Mammary epithelial cell (primary cell): ENCODE measurements at regions of chr1 and their contacts with region 1.

Region 1: GRCh38 chr1:231493421-231494185 is 34.9 kb upstream of the TSNAX start:
- DNase-seq: peak; percentile 29
- H3K4me3 ChIP-seq: no peak overlapping the region
- H3K27ac ChIP-seq: no peak overlapping the region
- H3K4me1 ChIP-seq: no peaks in the 10 kb centered on the region
- H3K27me3 ChIP-seq: no peaks in the 10 kb centered on the region
- CTCF ChIP-seq: no peak

Region 2: DNA sequence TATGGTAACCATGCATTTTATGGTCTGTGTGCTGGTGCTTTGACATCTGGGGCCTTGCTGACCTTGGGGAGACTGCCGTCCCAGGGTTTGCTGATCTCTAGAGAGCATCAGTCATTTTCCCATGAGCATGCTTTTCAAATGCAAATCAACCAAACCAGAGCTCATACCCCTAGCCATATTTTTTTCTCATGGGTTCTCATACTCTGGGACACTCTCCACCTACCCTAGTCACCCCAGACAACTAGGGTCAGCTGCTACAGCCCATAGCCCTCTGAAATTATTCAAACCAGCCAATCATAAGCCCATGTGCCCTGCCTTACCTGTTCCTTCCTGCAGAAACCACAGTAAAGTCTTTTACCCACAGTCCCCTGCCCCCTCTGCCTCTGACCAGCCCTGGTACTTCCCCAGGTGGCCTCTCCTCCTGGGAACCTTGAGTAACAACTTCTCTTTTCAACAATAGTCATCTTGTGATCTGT is 1965.9 kb after region 1 on chr1:
- CTCF ChIA-PET with region 1: no interaction called
- dilution Hi-C with region 1: no loop called
- in situ Hi-C with region 1: loop called in 1 of 2 experiments (anchors 25 kb)
- intact Hi-C with region 1: no loop called
- DNase-seq: peak; percentile 11
- H3K4me3 ChIP-seq: no peak overlapping the region
- H3K27ac ChIP-seq: no peak overlapping the region
- H3K4me1 ChIP-seq: no peaks in the 10 kb centered on the region
- H3K27me3 ChIP-seq: no peaks in the 10 kb centered on the region
- CTCF ChIP-seq: no peak